Ovary (tissue), 10 donors: ENCODE measurements at regions of chr21 and their contacts with region 1.

Region 1: DNA sequence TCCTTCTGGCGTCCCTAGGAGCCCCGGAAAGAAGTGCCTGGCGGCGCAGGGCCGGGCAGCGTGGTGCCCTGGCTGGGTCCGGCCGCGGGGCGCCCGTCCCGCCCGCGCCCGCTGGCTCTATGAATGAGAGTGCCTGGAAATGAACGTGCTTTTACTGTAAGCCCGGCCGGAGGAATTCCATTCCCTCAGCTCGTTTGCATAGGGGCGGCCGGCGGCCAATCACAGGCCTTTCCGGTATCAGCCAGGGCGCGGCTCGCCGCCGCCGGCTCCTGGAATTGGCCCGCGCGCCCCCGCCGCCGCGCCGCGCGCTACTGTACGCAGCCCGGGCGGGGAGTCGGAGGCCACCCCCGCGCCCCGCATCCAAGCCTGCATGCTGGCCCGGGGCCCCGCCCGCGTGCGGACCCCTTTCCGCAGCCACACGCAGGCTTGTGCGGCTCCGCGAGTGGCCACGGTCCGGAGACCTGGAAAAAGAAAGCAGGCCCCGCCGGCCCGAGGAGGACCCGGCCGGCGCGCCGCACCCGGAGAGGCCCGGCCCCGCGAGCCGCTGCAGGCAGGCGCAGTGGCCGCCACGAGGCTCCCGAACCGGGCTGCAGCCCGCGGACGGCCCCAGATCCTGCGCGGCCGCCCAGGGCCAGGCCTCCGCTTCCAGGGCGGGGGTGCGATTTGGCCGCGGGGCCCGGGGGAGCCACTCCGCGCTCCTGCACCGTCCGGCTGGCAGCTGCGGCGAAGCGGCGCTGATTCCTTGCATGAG is 160.4 kb downstream of the RUNX1 start:
- DNase-seq: peak; percentile 87 to 93 (median 90)
- H3K4me3 ChIP-seq: peak overlapping the region; percentile 54
- H3K27ac ChIP-seq: peak overlapping the region; percentile 34 to 80
- H3K4me1 ChIP-seq: peaks cover 2% of the 10 kb centered on the region
- H3K27me3 ChIP-seq: no peaks in the 10 kb centered on the region
- CTCF ChIP-seq: no peak
- EP300 ChIP-seq: peak; percentile 42
- POLR2A ChIP-seq: peak; percentile 67

Region 2: DNA sequence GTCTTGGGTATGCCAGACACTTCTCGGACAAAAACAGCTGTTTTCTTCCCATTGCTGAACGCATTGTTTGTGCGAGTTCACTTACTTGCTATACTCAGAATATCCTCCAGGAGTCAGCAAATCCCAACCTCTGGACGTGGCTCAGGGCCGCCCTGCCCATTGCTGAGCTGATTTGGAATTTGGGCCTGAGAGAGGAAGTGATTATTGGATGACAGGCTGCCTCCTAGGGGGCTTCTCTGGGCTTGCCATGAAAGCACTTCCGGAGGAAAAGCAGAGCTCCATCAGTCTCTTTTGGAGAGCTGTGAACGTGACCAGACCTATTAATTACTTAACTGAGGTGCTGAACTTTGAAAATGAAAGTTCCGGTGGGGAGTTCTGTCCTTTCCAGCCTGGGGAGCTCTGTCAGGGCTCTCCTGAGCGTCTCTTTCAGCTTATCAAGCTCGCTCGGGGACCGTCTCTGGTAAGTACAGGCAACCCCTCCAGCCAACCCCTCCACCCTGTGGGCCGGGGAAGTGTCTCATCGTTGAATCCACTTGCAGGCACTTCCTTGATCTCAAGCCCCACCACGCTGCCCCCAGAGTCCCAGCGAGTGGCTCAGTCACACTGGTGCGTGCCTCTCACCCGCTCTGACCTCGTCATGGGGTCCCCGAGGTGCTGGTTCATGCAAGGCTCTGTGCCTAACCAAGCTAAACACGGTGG is 143.0 kb before region 1 on chr21:
- intact Hi-C with region 1: loop called in 1 of 4 experiments (anchors 10 kb)
- DNase-seq: peak; percentile 53 to 70 (median 65)
- H3K4me3 ChIP-seq: no peak overlapping the region
- H3K27ac ChIP-seq: no peak overlapping the region
- H3K4me1 ChIP-seq: no peaks in the 10 kb centered on the region
- H3K27me3 ChIP-seq: peaks cover 2% of the 10 kb centered on the region
- CTCF ChIP-seq: peak; percentile 66 to 87 (median 82)
- EP300 ChIP-seq: no peak
- POLR2A ChIP-seq: no peak

Region 3: GRCh38 chr21:34782506-34783365 is 106.0 kb before region 1 on chr21:
- intact Hi-C with region 1: no loop called
- DNase-seq: no peak
- H3K4me3 ChIP-seq: no peak overlapping the region
- H3K27ac ChIP-seq: no peak overlapping the region
- H3K4me1 ChIP-seq: no peaks in the 10 kb centered on the region
- H3K27me3 ChIP-seq: no peaks in the 10 kb centered on the region
- CTCF ChIP-seq: no peak
- EP300 ChIP-seq: no peak
- POLR2A ChIP-seq: no peak

Region 4: DNA sequence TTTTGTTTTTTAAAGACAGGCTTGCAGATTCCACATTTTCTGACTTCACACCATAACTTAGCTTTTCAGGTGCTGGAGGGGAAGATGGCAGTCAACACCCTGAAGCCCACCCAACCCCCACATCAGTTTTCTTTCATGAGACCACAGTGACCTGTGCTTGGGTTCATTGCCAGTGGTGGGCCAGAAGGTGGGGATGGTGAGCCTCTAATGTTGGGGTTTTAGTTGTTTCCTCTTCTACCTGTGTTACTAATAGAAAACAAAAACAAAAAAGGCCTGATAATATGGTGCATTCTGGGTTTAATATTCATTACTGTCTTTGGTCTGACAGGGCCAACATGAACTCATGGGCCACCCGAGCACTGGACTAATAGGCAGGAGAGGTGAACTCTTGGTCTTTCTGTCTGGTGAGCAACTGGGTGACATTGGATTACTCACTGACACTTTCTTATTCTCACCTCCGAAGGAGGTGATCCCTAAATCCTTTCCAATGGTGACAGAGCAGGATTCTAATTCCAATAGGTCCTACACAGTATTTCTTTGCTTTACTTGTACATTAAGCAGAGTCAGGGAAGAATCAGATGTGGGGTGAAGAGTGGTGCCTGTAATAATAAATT is 87.1 kb before region 1 on chr21:
- intact Hi-C with region 1: loop called in 1 of 4 experiments (anchors 5 kb)
- DNase-seq: no peak
- H3K4me3 ChIP-seq: no peak overlapping the region
- H3K27ac ChIP-seq: no peak overlapping the region
- H3K4me1 ChIP-seq: no peaks in the 10 kb centered on the region
- H3K27me3 ChIP-seq: no peaks in the 10 kb centered on the region
- CTCF ChIP-seq: peak in 1 of 3 donors; percentile 8
- EP300 ChIP-seq: no peak
- POLR2A ChIP-seq: no peak

Region 5: GRCh38 chr21:35048706-35049617 is 160.2 kb after region 1 on chr21 and contains the start of gene RUNX1:
- intact Hi-C with region 1: no loop called
- DNase-seq: no peak
- H3K4me3 ChIP-seq: no peak within 1 kb of the TSS
- H3K27ac ChIP-seq: no peak within 1 kb of the TSS
- H3K4me1 ChIP-seq: peaks cover 1% of the 10 kb centered on the region
- H3K27me3 ChIP-seq: no peaks in the 10 kb centered on the region
- CTCF ChIP-seq: no peak
- EP300 ChIP-seq: no peak
- POLR2A ChIP-seq: no peak
- total RNA-seq, gene RUNX1: 6.9 to 27.4 (median 17.8) TPM

Region 6: GRCh38 chr21:35204850-35205541 is 316.3 kb after region 1 on chr21:
- intact Hi-C with region 1: loop called in 1 of 4 experiments (anchors 5 kb)
- DNase-seq: peak; percentile 86 to 94 (median 90)
- H3K4me3 ChIP-seq: peak overlapping the region; percentile 21
- H3K27ac ChIP-seq: peak overlapping the region; percentile 20 to 67
- H3K4me1 ChIP-seq: peaks cover 23% of the 10 kb centered on the region
- H3K27me3 ChIP-seq: no peaks in the 10 kb centered on the region
- CTCF ChIP-seq: peak in 1 of 3 donors; percentile 9
- EP300 ChIP-seq: no peak
- POLR2A ChIP-seq: no peak

Region 7: GRCh38 chr21:35400233-35400957 is 511.7 kb after region 1 on chr21:
- intact Hi-C with region 1: loop called in 1 of 4 experiments (anchors 5 kb)
- DNase-seq: no peak
- H3K4me3 ChIP-seq: no peak overlapping the region
- H3K27ac ChIP-seq: no peak overlapping the region
- H3K4me1 ChIP-seq: no peaks in the 10 kb centered on the region
- H3K27me3 ChIP-seq: no peaks in the 10 kb centered on the region
- CTCF ChIP-seq: peak in 2 of 3 donors; percentile 26 to 29
- EP300 ChIP-seq: no peak
- POLR2A ChIP-seq: no peak

Region 8: GRCh38 chr21:35840197-35840799 is 951.6 kb after region 1 on chr21:
- intact Hi-C with region 1: loop called in 2 of 4 experiments (anchors 5 to 10 kb)
- DNase-seq: peak; percentile 37 to 61 (median 44)
- H3K4me3 ChIP-seq: no peak overlapping the region
- H3K27ac ChIP-seq: no peak overlapping the region
- H3K4me1 ChIP-seq: no peaks in the 10 kb centered on the region
- H3K27me3 ChIP-seq: no peaks in the 10 kb centered on the region
- CTCF ChIP-seq: peak; percentile 37 to 70 (median 38)
- EP300 ChIP-seq: no peak
- POLR2A ChIP-seq: no peak

Region 9: GRCh38 chr21:35940074-35940927 is 1051.6 kb after region 1 on chr21:
- intact Hi-C with region 1: loop called in 1 of 4 experiments (anchors 5 kb)
- DNase-seq: peak; percentile 24 to 45 (median 38)
- H3K4me3 ChIP-seq: no peak overlapping the region
- H3K27ac ChIP-seq: no peak overlapping the region
- H3K4me1 ChIP-seq: no peaks in the 10 kb centered on the region
- H3K27me3 ChIP-seq: no peaks in the 10 kb centered on the region
- CTCF ChIP-seq: peak in 2 of 3 donors; percentile 35 to 67
- EP300 ChIP-seq: no peak
- POLR2A ChIP-seq: no peak